Prostate gland (tissue), 2 donors: ENCODE measurements at regions of chr10 and their contacts with region 1.

Region 1: GRCh38 chr10:121668314-121669027 is 70.2 kb upstream of the FGFR2 start:
- DNase-seq: peak; percentile 73
- H3K4me3 ChIP-seq: no peak overlapping the region
- H3K27ac ChIP-seq: peak overlapping the region; percentile 60 to 67
- H3K4me1 ChIP-seq: no peaks in the 10 kb centered on the region
- H3K27me3 ChIP-seq: no peaks in the 10 kb centered on the region
- CTCF ChIP-seq: no peak
- POLR2A ChIP-seq: no peak

Region 2: GRCh38 chr10:121627821-121628581 is 40.5 kb before region 1 on chr10:
- intact Hi-C with region 1: loop called (anchors 5 kb)
- DNase-seq: peak; percentile 79
- H3K4me3 ChIP-seq: no peak overlapping the region
- H3K27ac ChIP-seq: peak overlapping the region; percentile 48 to 50
- H3K4me1 ChIP-seq: no peaks in the 10 kb centered on the region
- H3K27me3 ChIP-seq: no peaks in the 10 kb centered on the region
- CTCF ChIP-seq: no peak
- POLR2A ChIP-seq: no peak

Region 3: DNA sequence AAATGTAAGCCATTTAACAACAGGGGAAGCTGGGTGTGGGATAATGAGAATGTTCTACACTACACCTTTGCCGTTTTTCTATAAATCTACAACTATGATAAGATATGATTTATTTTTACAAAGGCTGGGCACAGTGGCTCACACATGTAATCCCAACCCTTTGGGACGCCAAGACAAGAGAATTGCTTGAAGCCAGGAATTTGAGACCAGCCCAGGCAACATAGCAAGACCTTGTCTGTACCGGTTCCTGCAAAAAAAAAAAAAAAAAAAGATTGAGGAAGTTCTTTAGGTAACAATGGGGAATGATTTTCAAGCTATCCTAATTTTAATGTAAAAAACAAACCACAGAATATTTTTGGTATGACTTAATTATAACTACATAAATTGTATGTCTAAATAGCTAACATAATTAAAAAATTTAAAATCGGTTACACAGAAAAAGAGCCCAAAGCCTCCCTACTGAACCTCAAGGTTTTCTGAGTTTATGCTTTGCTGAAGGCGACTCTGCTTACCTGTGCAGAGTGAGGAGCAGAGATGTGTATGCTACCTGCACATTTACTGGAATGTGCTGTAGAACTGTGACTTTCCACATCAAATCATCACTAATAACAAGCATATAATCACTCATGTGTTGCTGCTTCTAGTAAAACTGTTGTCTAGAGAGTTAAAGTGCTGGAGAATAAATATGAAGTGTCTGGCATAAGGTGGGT is 95.9 kb after region 1 on chr10:
- intact Hi-C with region 1: no loop called
- DNase-seq: peak; percentile 15
- H3K4me3 ChIP-seq: no peak overlapping the region
- H3K27ac ChIP-seq: no peak overlapping the region
- H3K4me1 ChIP-seq: no peaks in the 10 kb centered on the region
- H3K27me3 ChIP-seq: no peaks in the 10 kb centered on the region
- CTCF ChIP-seq: no peak
- POLR2A ChIP-seq: no peak

Region 4: DNA sequence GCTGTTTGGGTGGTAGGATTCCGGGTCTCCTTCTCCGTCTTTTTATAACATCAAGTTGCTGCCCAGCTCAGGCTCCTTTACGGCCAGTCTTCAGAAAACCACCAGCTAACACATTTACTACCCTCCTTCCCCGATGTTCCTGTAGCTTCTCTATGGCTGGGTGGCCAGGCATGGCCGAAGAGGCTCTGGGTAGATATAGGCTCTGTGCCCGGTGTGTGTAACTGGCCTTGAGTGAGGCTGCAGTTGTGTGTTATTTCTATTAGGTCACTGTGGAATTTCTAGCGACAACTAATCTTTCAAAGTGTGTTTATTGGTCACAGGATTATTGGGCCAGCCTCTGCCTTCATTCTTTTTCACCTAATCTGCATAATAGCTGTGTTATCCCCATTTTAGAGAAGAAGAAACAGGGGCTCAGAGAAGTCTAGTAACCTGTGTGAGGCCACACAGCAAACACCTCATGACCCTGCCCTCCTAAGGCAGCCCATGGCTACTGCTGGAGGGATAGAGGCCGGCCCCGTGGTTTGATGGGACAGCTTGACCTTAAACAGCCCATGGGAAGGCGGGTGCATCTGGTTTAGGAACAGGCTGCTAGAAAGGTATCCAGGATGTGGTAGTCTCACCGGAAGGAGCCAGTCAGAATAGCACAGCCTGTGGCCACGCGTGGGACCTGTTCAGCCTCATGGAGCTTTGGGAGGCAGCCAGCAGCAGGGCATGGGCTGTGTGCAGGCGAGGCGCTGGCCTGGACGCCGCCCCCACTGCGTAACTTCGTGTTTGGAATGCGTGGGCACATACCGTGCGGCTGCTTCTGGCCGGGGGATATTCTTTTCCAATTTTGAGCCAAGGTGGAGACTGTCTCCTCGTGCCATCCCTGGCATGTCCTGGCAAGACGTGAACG is 822.6 kb after region 1 on chr10:
- intact Hi-C with region 1: no loop called
- DNase-seq: peak; percentile 66
- H3K4me3 ChIP-seq: no peak overlapping the region
- H3K27ac ChIP-seq: peak overlapping the region in 1 of 2 donors; percentile 43
- H3K4me1 ChIP-seq: no peaks in the 10 kb centered on the region
- H3K27me3 ChIP-seq: no peaks in the 10 kb centered on the region
- CTCF ChIP-seq: no peak
- POLR2A ChIP-seq: no peak